ENCODE measurements at regions of chr4 and their contacts with region 1.

Region 1: DNA sequence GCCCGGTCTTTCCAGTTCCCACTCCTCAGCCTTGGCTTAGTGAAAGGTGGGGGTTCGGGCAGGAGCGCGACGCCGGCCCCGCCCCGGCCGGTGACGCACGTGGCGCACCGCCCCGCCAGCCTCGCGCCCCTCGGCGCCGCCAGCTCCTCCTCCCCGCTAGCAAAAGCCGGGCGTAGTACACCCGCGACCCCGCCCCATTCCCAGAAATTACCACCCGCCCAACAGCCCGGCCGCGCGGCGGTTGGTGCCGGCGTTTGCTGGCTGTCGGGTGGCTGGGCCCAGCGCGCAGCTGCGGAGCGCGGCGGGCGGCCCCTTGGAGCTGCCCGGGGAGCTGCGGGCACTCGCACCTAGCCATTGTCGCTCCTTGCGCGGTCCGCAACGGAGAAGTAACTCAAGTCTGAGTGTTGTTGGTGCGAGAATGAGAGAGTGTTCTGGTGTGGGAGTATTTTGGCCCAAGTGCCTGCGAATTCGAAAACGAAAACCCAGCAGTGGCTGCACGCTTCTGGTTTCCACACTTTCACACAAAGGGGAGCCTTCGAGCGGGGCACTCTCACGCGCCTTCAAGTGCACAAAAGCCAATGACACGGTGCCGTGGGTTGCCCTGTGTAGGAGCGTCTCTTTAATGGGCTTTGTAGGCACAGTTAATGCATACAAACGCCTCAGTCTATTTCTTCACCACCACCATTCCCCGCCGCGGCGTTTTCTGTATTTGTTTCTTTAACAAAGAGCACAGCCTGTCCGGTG is 1.0 kb upstream of the ELF2 start:
- DNase-seq: peak; percentile 77 to 97 (median 94)

Region 2: GRCh38 chr4:139030614-139031235 is 147.3 kb before region 1 on chr4:
- intact Hi-C with region 1: loop called (anchors 5 kb)
- DNase-seq: peak in 41 of 42 donors; percentile 60 to 92 (median 81)

Region 3: GRCh38 chr4:139083956-139084803 is 93.9 kb before region 1 on chr4:
- intact Hi-C with region 1: loop called (anchors 1 kb)
- DNase-seq: peak; percentile 71 to 94 (median 86)

Region 4: GRCh38 chr4:139295206-139295941 is 117.3 kb after region 1 on chr4:
- intact Hi-C with region 1: loop called (anchors 2 kb)
- DNase-seq: peak; percentile 96 to 100 (median 99)

Region 5: DNA sequence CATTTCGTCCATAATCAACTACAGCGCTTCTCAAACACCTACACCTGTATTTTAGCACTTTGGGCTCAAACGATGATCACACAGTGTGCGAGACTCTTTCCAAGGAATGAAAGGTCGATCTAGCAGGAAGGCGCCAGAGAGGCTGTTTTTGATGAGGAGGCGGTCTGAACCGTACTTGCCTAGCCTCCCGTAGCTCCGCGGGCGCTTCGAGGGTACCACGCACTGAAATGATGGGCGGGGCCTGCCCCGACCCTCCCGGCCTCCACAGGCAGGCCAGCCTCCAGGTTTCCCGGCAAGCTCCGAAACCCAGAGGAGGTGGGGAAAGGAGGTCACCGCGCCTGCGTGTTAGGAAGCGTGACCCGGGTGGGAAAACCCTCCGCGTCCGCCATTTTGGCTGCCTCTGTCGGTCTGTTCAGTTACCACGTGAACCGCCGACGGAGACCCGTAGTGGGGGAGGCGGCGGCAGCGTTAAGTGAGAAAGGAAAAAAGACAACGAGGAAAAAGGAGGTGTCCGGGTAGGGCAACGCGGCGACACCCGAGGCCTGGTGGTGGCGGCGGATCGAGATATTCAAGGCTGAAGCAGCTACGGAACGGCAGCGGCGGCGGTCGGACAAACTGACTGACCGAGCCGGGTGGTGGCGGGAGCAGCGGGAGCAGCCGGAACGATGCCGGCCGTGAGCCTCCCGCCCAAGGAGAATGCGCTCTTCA is 123.2 kb after region 1 on chr4 and contains the start of gene NAA15:
- intact Hi-C with region 1: loop called (anchors 1 kb)
- DNase-seq: peak; percentile 93 to 99 (median 97)

Region 6: GRCh38 chr4:139484783-139485318 is 306.8 kb after region 1 on chr4:
- intact Hi-C with region 1: no loop called
- DNase-seq: no peak

Measured in head of caudate nucleus (tissue), 42 donors.